ENCODE measurements at regions of chrX and their contacts with region 1.

Region 1: DNA sequence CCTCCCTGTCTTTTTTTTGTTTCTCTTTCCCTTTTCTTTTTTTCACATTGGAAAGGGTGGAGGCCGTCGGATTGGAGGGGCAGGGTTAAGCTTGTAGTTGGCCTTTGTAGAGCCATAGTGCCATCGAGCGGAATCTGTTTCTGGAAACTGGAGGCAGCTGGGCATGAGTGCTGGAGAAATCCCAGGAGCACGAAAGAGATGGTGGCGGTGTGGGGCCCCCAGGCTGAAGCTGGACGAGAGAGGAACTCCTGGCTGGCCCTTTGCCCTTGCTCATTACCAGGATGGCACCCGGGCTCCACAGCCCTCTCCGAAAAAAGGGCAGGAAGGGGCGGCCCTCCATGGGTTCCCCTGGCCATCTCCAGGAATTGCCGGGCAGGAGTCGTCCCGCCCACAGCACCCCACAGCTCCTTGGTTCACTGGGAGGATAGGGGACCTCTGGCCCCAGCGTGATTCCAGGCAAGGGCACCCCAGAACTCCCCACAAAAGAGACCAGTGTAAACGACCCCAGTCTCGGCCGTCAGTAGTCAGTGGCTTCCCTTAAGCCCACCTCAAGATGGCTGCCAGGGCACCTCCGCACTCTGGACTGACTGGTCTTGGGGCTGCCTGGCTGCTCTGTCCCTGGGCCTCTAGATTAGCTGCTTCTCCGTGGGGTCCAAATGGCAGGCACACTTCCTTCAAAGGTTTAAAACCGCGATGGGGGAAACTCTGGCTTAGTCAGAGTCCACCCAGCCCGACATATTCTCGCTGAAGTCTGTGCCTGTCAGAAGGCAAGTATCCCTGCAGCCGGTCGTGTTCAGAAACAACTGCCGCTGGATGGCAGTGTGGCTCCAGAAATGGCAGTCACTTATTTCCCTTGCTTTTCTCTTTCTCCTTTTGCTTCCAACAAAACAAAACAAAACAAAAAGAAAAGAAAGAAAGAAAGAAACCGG is 74.1 kb downstream of the NBDY start:
- DNase-seq: peak; percentile 39
- ATAC-seq: peak; percentile 95
- H3K4me3 ChIP-seq: peak overlapping the region; percentile 53 to 70 (median 55); a peak in 5 of 6 replicates
- H3K27ac ChIP-seq: no peak overlapping the region
- H3K4me1 ChIP-seq: no peaks in the 10 kb centered on the region
- H3K27me3 ChIP-seq: no peaks in the 10 kb centered on the region
- CTCF ChIP-seq: peak; percentile 79
- EP300 ChIP-seq: no peak
- POLR2A ChIP-seq: no peak
- RAD21 ChIP-seq: peak; percentile 46; the same call in 1 of the 2 replicates

Region 2: GRCh38 chrX:56782352-56782751 is 20.8 kb before region 1 on chrX:
- CTCF ChIA-PET with region 1: no interaction called
- POLR2A ChIA-PET with region 1: no interaction called
- in situ Hi-C with region 1: no loop called
- intact Hi-C with region 1: no loop called
- DNase-seq: no peak
- ATAC-seq: no peak
- H3K4me3 ChIP-seq: no peak overlapping the region
- H3K27ac ChIP-seq: no peak overlapping the region
- H3K4me1 ChIP-seq: peaks cover 28% of the 10 kb centered on the region
- H3K27me3 ChIP-seq: no peaks in the 10 kb centered on the region
- CTCF ChIP-seq: no peak
- EP300 ChIP-seq: no peak
- POLR2A ChIP-seq: no peak
- RAD21 ChIP-seq: no peak

Region 3: GRCh38 chrX:56860888-56861287 is 57.7 kb after region 1 on chrX:
- CTCF ChIA-PET with region 1: no interaction called
- POLR2A ChIA-PET with region 1: no interaction called
- in situ Hi-C with region 1: no loop called
- intact Hi-C with region 1: no loop called
- DNase-seq: no peak
- ATAC-seq: no peak
- H3K4me3 ChIP-seq: no peak overlapping the region
- H3K27ac ChIP-seq: no peak overlapping the region
- H3K4me1 ChIP-seq: no peaks in the 10 kb centered on the region
- H3K27me3 ChIP-seq: no peaks in the 10 kb centered on the region
- CTCF ChIP-seq: no peak
- EP300 ChIP-seq: no peak
- POLR2A ChIP-seq: no peak
- RAD21 ChIP-seq: no peak

Region 4: GRCh38 chrX:56978172-56978571 is 175.0 kb after region 1 on chrX:
- CTCF ChIA-PET with region 1: interaction called, 12 read pairs
- POLR2A ChIA-PET with region 1: no interaction called
- in situ Hi-C with region 1: loop called (anchors 25 kb)
- intact Hi-C with region 1: loop called (anchors 1 kb)
- DNase-seq: peak; percentile 14
- ATAC-seq: peak; percentile 74
- H3K4me3 ChIP-seq: no peak overlapping the region
- H3K27ac ChIP-seq: no peak overlapping the region
- H3K4me1 ChIP-seq: no peaks in the 10 kb centered on the region
- H3K27me3 ChIP-seq: no peaks in the 10 kb centered on the region
- CTCF ChIP-seq: peak; percentile 70
- EP300 ChIP-seq: no peak
- POLR2A ChIP-seq: no peak
- RAD21 ChIP-seq: no peak